Activated CD4-positive, alpha-beta T cell treated with anti-CD3 and anti-CD28 coated beads, Interleukin-2, amount 10 ng/mL, durations not matched to agents 24 days and 14 days (primary cell): ENCODE measurements at regions of chr1 and their contacts with region 1.

Region 1: DNA sequence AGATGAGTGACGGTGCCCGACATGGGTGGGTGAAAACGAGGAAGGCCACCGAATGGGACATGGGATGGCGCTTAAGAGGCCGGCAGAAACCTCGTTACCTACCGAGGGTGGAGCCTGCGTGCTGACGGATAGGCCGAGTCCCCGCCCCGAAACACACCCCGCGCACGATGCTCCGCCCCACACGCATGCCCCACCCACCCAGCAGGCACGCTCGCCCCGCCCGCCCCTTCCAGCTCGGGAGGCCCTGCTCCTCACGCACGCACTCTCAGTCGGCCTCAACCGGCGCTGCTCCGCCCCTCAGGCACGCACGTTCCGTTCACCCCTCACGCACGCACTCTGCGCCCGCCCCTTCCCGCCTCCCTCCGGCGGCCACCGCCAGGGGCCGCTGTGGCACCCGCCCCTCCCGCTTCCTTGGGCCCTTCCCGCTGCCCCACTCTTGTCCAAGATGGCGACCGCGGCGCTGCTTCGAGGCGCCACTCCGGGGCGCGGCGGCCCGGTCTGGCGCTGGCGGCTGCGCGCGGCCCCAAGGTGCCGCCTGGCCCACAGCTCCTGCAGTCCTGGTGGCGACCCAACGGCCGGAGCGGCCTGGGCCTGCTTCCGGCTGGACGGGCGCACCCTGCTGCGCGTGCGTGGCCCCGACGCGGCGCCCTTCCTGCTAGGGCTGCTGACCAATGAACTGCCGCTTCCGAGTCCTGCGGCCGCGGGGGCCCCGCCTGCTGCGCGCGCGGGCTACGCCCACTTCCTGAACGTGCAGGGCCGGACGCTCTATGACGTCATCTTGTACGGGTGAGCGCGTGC is at the start of gene IBA57:
- DNase-seq: peak; percentile 100
- H3K4me3 Mint-ChIP-seq: peak within 1 kb of the TSS; percentile 91
- H3K27ac Mint-ChIP-seq: peak within 1 kb of the TSS; percentile 96
- H3K4me1 Mint-ChIP-seq: peaks cover 25% of the 10 kb centered on the region
- H3K27me3 Mint-ChIP-seq: no peaks in the 10 kb centered on the region
- total RNA-seq, gene IBA57: 10.8 and 11.4 TPM in 2 replicates

Region 2: GRCh38 chr1:227946624-227947385 is 218.8 kb before region 1 on chr1:
- intact Hi-C with region 1: no loop called
- DNase-seq: peak; percentile 87
- H3K4me3 Mint-ChIP-seq: peak overlapping the region; percentile 75
- H3K27ac Mint-ChIP-seq: no peak overlapping the region
- H3K4me1 Mint-ChIP-seq: no peaks in the 10 kb centered on the region
- H3K27me3 Mint-ChIP-seq: peaks cover 30% of the 10 kb centered on the region

Region 3: DNA sequence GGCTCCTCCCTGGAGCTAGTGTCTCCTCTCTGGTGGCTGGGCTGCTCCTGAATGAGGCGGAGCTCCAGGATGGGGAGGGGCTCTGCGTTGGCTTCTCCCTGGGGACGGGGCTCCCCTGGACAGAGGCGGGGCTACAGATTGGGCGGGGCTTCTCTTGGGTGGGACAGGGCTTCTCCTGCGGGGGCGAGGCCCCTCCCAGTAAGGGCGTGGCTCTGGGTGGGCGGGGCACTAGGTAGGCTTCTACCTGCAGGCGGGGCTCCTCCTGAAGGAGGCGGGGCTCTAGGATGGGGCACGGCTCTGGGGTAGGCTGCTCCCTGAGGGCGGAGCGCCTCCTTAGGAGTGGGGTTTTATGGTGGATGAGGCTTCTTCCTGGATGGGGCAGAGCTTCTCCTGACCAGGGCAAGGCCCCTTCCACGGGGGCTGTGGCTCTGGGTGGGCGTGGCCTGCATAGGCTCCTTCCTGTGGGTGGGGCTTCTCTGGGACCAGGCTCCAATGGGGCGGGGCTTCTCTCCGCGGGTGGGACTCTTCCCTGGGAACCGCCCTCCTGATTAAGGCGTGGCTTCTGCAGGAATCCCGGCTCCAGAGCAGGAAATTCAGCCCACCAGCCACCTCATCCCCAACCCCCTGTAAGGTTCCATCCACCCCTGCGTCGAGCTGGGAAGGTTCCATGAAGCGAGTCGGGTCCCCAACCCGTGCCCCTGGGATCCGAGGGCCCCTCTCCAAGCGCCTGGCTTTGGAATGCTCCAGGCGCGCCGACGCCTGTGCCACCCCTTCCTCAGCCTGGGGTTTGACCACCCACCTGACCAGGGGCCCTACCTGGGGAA is 105.7 kb before region 1 on chr1:
- intact Hi-C with region 1: loop called (anchors 1 kb)
- DNase-seq: peak; percentile 90
- H3K4me3 Mint-ChIP-seq: peak overlapping the region; percentile 80
- H3K27ac Mint-ChIP-seq: no peak overlapping the region
- H3K4me1 Mint-ChIP-seq: peaks cover 5% of the 10 kb centered on the region
- H3K27me3 Mint-ChIP-seq: peaks cover 40% of the 10 kb centered on the region

Region 4: DNA sequence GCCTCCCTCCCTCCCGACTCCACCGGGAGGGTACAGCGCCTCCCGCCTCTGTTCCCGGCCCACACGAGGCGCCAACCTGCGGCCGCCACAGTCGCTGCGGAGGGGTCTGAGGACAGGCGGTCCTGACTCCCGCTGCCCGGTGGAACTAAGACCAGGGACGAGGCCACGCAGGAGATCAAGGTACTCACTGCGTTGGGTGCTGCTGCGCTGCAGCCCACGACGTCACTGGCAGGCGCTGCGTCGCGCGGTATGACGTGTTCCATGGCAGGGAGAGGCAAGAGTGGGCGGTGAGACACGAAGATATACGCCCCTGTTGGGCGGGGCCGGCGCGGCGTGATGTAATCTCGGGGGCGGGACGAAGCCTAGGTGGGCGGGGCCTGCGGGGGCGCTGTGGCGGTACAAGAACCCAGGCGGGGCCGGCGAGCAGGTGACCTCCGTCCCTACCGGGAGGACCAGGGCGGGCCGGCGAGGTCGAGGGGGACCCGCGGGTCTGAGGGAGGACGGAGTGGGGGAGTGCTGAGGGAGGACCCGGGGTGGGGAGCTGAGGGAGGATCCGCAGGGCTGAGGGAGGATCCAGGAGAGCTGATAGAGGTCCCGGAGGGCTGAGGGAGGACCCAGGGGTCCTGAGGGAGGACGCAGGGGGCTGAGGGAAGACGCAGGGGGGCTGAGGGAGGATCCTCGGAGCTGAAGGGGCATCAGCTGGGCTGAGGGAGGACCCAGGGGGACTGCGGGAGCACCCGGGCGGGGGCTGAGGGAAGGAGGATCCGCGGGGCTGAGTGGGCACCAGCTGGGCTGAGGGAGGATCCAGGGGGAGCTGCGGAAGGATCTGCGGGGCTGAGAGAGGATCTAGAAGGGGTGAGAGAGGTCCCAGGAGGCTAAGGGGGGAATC is 56.3 kb before region 1 on chr1 and contains the start of gene MRPL55:
- intact Hi-C with region 1: loop called (anchors 1 kb)
- DNase-seq: peak; percentile 100
- H3K4me3 Mint-ChIP-seq: peak within 1 kb of the TSS; percentile 95
- H3K27ac Mint-ChIP-seq: peak within 1 kb of the TSS; percentile 88
- H3K4me1 Mint-ChIP-seq: peaks cover 23% of the 10 kb centered on the region
- H3K27me3 Mint-ChIP-seq: peaks cover 2% of the 10 kb centered on the region
- total RNA-seq, gene MRPL55: 55.2 and 62.2 TPM in 2 replicates

Region 5: DNA sequence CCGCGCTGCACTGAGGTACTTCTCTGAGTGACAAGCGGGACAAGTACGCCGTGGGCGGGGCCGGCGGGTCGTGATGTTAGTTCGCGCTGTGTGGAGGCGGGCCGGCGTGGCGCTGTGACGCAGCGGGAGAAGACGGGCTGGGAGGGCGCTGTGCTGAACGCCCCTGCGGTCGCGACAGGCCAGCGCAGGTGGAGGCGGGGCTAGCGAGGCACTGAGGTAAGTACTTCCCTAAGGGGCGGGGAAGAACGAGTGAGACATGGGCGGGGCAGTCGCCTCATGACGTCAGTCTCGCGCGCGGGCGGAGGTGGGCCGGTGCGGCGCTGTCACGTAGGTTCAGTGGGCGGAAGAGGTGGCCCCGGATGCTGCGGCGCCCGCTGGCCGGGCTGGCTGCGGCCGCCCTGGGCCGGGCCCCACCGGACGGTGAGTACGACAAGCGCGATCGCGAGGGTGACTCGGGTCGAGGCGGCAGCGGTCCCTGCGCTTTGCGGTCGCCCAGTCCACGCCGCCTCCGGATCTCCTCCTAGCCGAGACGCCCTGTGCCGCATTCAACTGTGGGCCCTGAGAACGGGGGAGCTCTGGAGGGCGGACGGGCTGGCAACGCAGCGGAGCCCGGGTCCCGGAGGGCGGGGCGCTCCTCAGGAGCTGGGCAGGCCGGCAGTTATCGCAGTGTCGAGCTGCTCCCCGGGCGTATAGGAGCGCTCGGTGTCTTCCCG is 25.5 kb before region 1 on chr1 and contains the start of gene GUK1:
- intact Hi-C with region 1: loop called (anchors 1 kb)
- DNase-seq: peak; percentile 100
- H3K4me3 Mint-ChIP-seq: peak within 1 kb of the TSS; percentile 98
- H3K27ac Mint-ChIP-seq: peak within 1 kb of the TSS; percentile 97
- H3K4me1 Mint-ChIP-seq: peaks cover 26% of the 10 kb centered on the region
- H3K27me3 Mint-ChIP-seq: peaks cover 29% of the 10 kb centered on the region
- total RNA-seq, gene GUK1: 211 and 222 TPM in 2 replicates

Region 6: GRCh38 chr1:228150461-228151179 is 15.0 kb before region 1 on chr1:
- intact Hi-C with region 1: no loop called
- DNase-seq: no peak
- H3K4me3 Mint-ChIP-seq: no peak overlapping the region
- H3K27ac Mint-ChIP-seq: no peak overlapping the region
- H3K4me1 Mint-ChIP-seq: peaks cover 10% of the 10 kb centered on the region
- H3K27me3 Mint-ChIP-seq: no peaks in the 10 kb centered on the region

Region 7: GRCh38 chr1:228207381-228207810 is 41.8 kb after region 1 on chr1:
- intact Hi-C with region 1: no loop called
- DNase-seq: no peak
- H3K4me3 Mint-ChIP-seq: no peak overlapping the region
- H3K27ac Mint-ChIP-seq: no peak overlapping the region
- H3K4me1 Mint-ChIP-seq: no peaks in the 10 kb centered on the region
- H3K27me3 Mint-ChIP-seq: peaks cover 7% of the 10 kb centered on the region

Region 8: DNA sequence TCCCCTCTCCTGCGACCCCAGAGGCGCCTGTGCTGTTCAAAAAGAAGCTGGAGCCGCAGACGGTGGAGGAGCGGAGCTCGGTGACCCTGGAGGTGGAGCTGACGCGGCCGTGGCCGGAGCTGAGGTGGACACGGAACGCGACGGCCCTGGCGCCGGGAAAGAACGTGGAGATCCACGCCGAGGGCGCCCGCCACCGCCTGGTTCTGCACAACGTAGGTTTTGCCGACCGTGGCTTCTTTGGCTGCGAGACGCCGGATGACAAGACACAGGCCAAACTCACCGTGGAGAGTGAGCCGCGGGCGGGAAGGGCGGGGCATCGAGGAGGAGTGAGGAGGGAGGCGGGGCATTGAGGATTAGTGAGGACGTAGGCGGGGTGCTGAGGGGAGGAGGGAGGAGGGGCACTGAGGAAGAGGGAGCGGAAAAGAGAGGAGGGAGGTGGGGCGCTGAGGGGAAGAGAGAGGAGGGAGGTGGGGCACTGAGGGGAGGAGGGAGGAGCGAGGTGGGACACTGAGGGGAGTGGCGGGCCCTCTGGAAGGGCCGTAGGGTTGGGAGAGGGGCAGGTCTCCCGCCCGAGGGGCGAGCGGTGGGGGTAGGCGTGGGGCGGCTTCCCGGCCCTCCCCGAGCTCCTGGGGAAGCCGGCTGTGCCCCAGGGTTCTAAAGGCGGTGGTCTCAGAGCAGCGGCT is 110.3 kb after region 1 on chr1:
- intact Hi-C with region 1: loop called (anchors 10 kb)
- DNase-seq: peak; percentile 96
- H3K4me3 Mint-ChIP-seq: peak overlapping the region; percentile 80
- H3K27ac Mint-ChIP-seq: peak overlapping the region; percentile 34
- H3K4me1 Mint-ChIP-seq: peaks cover 6% of the 10 kb centered on the region
- H3K27me3 Mint-ChIP-seq: no peaks in the 10 kb centered on the region

Region 9: DNA sequence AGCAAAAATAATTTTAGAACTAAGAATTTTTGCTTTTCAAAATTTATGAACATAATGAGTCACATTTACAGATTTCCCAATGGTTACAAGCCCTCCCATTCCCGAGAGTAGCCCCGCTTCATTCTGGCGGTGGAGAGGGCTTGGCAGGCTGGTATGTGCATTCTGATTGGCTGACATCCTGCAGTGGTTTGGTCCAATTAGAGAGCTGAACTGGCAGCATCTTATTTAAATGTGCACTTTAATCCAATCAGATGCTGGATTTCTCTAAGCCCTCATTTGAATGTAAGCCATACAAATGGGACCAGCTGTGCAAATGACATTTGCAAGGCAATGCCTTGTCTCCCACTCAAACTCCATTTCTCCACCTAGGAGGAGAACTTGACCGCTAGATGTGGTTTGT is 269.1 kb after region 1 on chr1:
- intact Hi-C with region 1: no loop called
- DNase-seq: no peak
- H3K4me3 Mint-ChIP-seq: no peak overlapping the region
- H3K27ac Mint-ChIP-seq: no peak overlapping the region
- H3K4me1 Mint-ChIP-seq: peaks cover 5% of the 10 kb centered on the region
- H3K27me3 Mint-ChIP-seq: peaks cover 25% of the 10 kb centered on the region

Region 10: GRCh38 chr1:228457396-228458176 is 292.0 kb after region 1 on chr1:
- intact Hi-C with region 1: loop called (anchors 1 kb)
- DNase-seq: peak; percentile 97
- H3K4me3 Mint-ChIP-seq: peak overlapping the region; percentile 97
- H3K27ac Mint-ChIP-seq: peak overlapping the region; percentile 99
- H3K4me1 Mint-ChIP-seq: peaks cover 47% of the 10 kb centered on the region
- H3K27me3 Mint-ChIP-seq: peaks cover 3% of the 10 kb centered on the region